ENCODE measurements at regions of chr12 and their contacts with region 1.

Region 1: GRCh38 chr12:111174251-111174960 is 194.5 kb downstream of the PHETA1 start:
- DNase-seq: peak in 3 of 9 donors; percentile 5 to 12 (median 5)
- ATAC-seq: no peak
- H3K4me3 ChIP-seq: no peak overlapping the region
- H3K4me3 Mint-ChIP-seq: no peak overlapping the region
- H3K27ac ChIP-seq: no peak overlapping the region
- H3K27ac Mint-ChIP-seq: no peak overlapping the region
- H3K4me1 ChIP-seq: no peaks in the 10 kb centered on the region
- H3K4me1 Mint-ChIP-seq: peaks cover 0 to 12% (median 4%) of the 10 kb centered on the region in 7 donors
- H3K27me3 ChIP-seq: no peaks in the 10 kb centered on the region
- H3K27me3 Mint-ChIP-seq: peaks cover 0 to 19% (median 14%) of the 10 kb centered on the region in 5 donors

Region 2: DNA sequence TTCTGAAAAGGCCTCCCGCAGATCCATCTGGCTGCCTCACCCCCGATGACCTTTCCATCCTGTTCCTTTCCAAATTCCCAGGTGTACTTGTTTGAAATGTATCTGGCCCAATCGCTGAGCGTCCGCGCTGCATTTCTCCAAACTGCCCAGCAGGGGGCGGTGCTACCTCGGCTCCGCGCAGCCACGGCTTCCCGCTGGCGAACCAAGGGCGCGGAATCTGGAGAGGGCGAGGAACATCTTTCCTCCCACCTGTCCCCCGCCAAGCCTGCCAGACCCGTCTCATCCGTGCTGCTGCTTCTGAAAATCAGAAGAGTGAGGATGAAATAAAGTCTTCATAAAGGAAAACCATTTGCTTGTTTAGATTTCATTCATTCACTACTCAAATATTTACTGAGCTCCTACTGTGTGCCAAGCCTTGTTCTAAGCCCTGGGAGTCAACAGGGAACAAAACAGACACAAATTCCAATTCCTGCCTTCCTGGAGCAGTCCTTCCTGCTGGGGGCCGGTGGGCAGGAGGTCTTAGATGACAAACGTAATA is 237.2 kb before region 1 on chr12:
- CTCF ChIA-PET with region 1: interaction called, 3 read pairs
- POLR2A ChIA-PET with region 1: no interaction called
- intact Hi-C with region 1: loop called in 1 of 2 experiments (anchors 1 kb)
- DNase-seq: peak; percentile 22 to 67 (median 51)
- ATAC-seq: peak; percentile 72
- H3K4me3 ChIP-seq: no peak overlapping the region
- H3K4me3 Mint-ChIP-seq: peak overlapping the region in 5 of 10 donors; percentile 7 to 61 (median 31)
- H3K27ac ChIP-seq: no peak overlapping the region
- H3K27ac Mint-ChIP-seq: no peak overlapping the region
- H3K4me1 ChIP-seq: peaks cover 0 to 5% of the 10 kb centered on the region in 2 donors
- H3K4me1 Mint-ChIP-seq: peaks cover 0 to 7% (median 6%) of the 10 kb centered on the region in 7 donors
- H3K27me3 ChIP-seq: no peaks in the 10 kb centered on the region
- H3K27me3 Mint-ChIP-seq: peaks cover 7 to 22% (median 13%) of the 10 kb centered on the region in 5 donors

Region 3: DNA sequence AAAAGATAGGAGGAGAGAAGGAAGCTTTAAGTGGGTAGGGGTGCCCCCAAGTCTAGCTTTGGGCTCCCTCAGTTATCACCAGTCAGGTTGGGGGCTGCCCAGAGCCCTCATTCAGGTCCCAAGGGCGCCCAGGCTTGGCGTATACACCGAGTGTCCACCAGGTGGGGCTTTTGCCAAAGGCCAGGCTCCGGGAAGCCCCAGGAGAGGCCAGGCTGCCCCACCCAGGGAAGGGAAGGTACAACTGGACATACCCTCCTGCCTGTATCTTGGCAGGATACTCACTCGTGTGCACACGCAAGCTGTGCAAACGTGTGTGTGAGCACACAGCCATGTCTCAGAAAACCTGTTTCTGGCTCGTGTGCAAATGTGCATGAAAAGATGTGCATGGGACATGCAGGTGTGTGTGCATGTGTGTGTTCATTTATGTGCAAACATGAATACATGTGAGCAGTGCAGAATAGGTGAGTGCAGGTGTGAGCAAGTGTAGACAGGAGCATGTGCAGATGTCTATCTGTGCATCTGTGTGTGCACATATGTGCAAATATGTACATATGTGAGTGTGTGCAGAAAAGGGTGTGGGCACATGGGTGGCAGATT is 150.1 kb before region 1 on chr12:
- CTCF ChIA-PET with region 1: interaction called, 10 read pairs
- POLR2A ChIA-PET with region 1: no interaction called
- intact Hi-C with region 1: loop called in 1 of 2 experiments (anchors 1 kb)
- DNase-seq: peak in 8 of 9 donors; percentile 25 to 55 (median 40)
- ATAC-seq: peak; percentile 76
- H3K4me3 ChIP-seq: no peak overlapping the region
- H3K4me3 Mint-ChIP-seq: no peak overlapping the region
- H3K27ac ChIP-seq: no peak overlapping the region
- H3K27ac Mint-ChIP-seq: peak overlapping the region in 3 of 9 donors; percentile 33 to 77 (median 41)
- H3K4me1 ChIP-seq: peaks cover 0 to 6% of the 10 kb centered on the region in 2 donors
- H3K4me1 Mint-ChIP-seq: peaks cover 0 to 10% (median 6%) of the 10 kb centered on the region in 7 donors
- H3K27me3 ChIP-seq: no peaks in the 10 kb centered on the region
- H3K27me3 Mint-ChIP-seq: peaks cover 12 to 41% (median 25%) of the 10 kb centered on the region in 5 donors

Region 4: GRCh38 chr12:111138016-111138415 is 36.4 kb before region 1 on chr12:
- CTCF ChIA-PET with region 1: no interaction called
- POLR2A ChIA-PET with region 1: no interaction called
- intact Hi-C with region 1: no loop called
- DNase-seq: no peak
- ATAC-seq: no peak
- H3K4me3 ChIP-seq: no peak overlapping the region
- H3K4me3 Mint-ChIP-seq: no peak overlapping the region
- H3K27ac ChIP-seq: no peak overlapping the region
- H3K27ac Mint-ChIP-seq: peak overlapping the region in 1 of 9 donors; percentile 55
- H3K4me1 ChIP-seq: no peaks in the 10 kb centered on the region
- H3K4me1 Mint-ChIP-seq: peaks cover 0 to 1% (median 0%) of the 10 kb centered on the region in 7 donors
- H3K27me3 ChIP-seq: no peaks in the 10 kb centered on the region
- H3K27me3 Mint-ChIP-seq: peaks cover 0 to 8% (median 0%) of the 10 kb centered on the region in 5 donors

Region 5: DNA sequence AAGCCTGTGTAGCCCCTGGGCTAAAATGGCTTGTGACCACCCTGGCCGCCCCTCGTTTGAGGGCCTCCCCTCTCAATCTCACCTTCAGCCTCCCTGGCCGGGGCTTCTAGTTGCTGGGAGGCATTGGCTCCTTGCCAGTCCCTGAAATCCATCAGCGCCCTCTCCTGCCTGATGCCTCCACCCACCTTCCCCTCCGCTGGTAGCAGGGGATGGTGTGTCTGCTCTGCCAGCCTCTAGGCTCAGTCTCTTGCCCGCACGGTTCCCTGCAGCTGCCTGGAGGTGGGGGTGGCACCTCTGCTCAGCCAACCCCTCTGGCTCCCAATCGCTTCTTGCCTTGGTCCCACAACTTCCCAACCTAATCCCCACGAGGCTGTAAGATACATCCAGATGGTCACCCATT is 26.6 kb after region 1 on chr12:
- CTCF ChIA-PET with region 1: no interaction called
- POLR2A ChIA-PET with region 1: interaction called, 10 read pairs
- intact Hi-C with region 1: no loop called
- DNase-seq: no peak
- ATAC-seq: no peak
- H3K4me3 ChIP-seq: no peak overlapping the region
- H3K4me3 Mint-ChIP-seq: no peak overlapping the region
- H3K27ac ChIP-seq: no peak overlapping the region
- H3K27ac Mint-ChIP-seq: no peak overlapping the region
- H3K4me1 ChIP-seq: no peaks in the 10 kb centered on the region
- H3K4me1 Mint-ChIP-seq: peaks cover 0 to 12% (median 0%) of the 10 kb centered on the region in 7 donors
- H3K27me3 ChIP-seq: no peaks in the 10 kb centered on the region
- H3K27me3 Mint-ChIP-seq: peaks cover 5 to 21% (median 13%) of the 10 kb centered on the region in 5 donors

Region 6: DNA sequence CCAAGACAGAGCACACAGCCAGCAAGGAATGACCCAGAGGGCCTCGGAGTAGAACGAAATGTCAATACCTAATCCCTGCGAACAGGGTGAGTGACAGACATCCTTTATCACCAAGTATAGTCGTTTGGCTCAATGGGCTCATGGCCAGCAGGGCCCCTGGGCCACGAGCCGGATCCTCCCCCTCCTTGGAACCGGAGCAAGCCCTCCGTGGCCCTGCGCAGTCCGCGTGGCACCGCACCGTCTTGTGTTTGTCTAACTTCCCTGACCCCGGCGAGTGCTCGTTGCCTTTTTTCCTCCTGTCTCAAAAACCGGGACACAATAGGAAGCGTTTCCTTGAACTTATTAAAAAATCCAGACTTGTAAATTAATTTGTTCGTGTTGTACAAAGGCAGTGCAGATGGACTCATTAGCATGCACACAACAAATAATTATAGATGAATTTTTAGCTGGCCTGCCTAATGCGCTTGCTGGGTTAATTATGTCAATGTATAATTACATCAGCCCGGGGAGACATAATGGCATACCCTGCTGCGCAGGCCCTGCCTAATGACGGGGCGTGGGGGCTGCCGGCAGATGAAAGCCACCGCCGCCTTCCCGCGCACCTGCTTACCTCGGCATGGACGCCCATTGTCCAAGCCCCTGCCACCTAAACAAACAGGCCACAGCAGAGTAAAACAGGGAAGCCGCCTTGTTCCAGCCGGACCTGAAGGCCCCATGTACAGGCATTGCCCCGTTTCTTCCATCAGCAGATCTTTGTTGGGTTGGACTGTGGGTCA is 112.9 kb after region 1 on chr12:
- CTCF ChIA-PET with region 1: no interaction called
- POLR2A ChIA-PET with region 1: no interaction called
- intact Hi-C with region 1: no loop called
- DNase-seq: no peak
- ATAC-seq: no peak
- H3K4me3 ChIP-seq: no peak overlapping the region
- H3K4me3 Mint-ChIP-seq: no peak overlapping the region
- H3K27ac ChIP-seq: no peak overlapping the region
- H3K27ac Mint-ChIP-seq: no peak overlapping the region
- H3K4me1 ChIP-seq: no peaks in the 10 kb centered on the region
- H3K4me1 Mint-ChIP-seq: no peaks in the 10 kb centered on the region
- H3K27me3 ChIP-seq: no peaks in the 10 kb centered on the region
- H3K27me3 Mint-ChIP-seq: peaks cover 0 to 4% (median 0%) of the 10 kb centered on the region in 5 donors

Region 7: DNA sequence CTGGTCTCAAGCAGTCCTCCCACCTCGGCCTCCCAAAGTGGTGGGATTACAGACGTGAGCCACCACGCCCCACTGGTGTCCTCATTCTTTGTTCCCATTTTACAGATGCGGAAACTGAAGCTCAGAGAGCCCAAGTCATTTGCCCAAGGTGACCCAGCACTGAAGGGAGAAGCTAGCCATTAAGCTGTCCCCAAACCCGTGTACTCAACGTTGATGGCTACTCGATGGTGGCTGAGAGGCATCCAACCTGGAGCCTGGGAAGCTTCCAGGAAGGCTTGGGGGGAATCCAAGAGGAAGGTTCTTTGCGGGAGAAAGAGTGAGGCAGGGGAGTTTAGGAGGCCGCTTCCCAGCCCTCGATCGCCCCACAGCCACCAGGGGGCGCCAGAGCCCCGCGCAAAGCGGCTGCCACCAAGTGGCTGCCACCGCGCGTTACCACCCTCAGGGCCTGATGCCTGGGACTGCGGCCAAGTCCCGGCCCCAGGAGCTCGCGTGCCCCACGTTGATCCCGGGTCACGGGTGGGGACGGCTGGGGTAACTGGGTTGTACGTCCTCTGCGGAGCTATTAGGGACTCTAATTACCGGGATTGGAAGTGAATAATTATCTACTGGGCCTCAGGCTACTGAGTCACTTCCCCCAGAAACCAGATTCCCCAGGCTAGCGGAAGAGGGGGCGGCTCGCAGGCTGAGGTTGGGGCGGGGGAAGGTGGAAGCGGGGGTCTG is 222.5 kb after region 1 on chr12:
- CTCF ChIA-PET with region 1: no interaction called
- POLR2A ChIA-PET with region 1: no interaction called
- intact Hi-C with region 1: no loop called
- DNase-seq: peak; percentile 76 to 95 (median 86)
- ATAC-seq: peak; percentile 86
- H3K4me3 ChIP-seq: no peak overlapping the region
- H3K4me3 Mint-ChIP-seq: peak overlapping the region in 7 of 10 donors; percentile 32 to 67 (median 53)
- H3K27ac ChIP-seq: no peak overlapping the region
- H3K27ac Mint-ChIP-seq: peak overlapping the region in 6 of 9 donors; percentile 10 to 67 (median 43)
- H3K4me1 ChIP-seq: peaks cover 0 to 3% of the 10 kb centered on the region in 2 donors
- H3K4me1 Mint-ChIP-seq: peaks cover 0 to 26% (median 10%) of the 10 kb centered on the region in 7 donors
- H3K27me3 ChIP-seq: no peaks in the 10 kb centered on the region
- H3K27me3 Mint-ChIP-seq: no peaks in the 10 kb centered on the region